ENCODE measurements at regions of chr9 and their contacts with region 1.

Region 1: GRCh38 chr9:112443200-112443599 is 43.4 kb upstream of the KIAA1958 start:
- DNase-seq: peak; percentile 18
- H3K4me3 Mint-ChIP-seq: no peak overlapping the region
- H3K27ac Mint-ChIP-seq: no peak overlapping the region
- H3K4me1 Mint-ChIP-seq: no peaks in the 10 kb centered on the region
- H3K27me3 Mint-ChIP-seq: no peaks in the 10 kb centered on the region

Region 2: DNA sequence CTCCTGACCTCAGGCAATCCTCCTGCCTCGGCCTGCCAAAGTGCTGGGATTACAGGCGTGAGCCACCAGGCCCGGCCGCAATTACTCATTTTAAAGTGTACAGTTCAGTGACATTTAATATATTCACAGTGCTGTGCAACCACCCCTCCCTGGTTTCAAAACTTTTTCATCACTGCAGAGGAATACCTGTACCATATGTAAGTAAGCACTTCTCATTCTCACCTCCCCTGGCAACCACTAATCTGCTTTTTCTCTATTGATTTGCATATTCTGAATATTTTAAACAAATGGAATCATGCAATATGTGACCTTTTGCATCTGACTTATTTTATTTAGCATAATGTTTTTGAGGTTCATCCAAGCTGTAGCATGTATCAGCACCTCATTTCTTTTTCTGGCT is 22.2 kb after region 1 on chr9:
- CTCF ChIA-PET with region 1: no interaction called
- POLR2A ChIA-PET with region 1: no interaction called
- intact Hi-C with region 1: no loop called
- DNase-seq: no peak
- H3K4me3 Mint-ChIP-seq: no peak overlapping the region
- H3K27ac Mint-ChIP-seq: no peak overlapping the region
- H3K4me1 Mint-ChIP-seq: no peaks in the 10 kb centered on the region
- H3K27me3 Mint-ChIP-seq: no peaks in the 10 kb centered on the region

Region 3: DNA sequence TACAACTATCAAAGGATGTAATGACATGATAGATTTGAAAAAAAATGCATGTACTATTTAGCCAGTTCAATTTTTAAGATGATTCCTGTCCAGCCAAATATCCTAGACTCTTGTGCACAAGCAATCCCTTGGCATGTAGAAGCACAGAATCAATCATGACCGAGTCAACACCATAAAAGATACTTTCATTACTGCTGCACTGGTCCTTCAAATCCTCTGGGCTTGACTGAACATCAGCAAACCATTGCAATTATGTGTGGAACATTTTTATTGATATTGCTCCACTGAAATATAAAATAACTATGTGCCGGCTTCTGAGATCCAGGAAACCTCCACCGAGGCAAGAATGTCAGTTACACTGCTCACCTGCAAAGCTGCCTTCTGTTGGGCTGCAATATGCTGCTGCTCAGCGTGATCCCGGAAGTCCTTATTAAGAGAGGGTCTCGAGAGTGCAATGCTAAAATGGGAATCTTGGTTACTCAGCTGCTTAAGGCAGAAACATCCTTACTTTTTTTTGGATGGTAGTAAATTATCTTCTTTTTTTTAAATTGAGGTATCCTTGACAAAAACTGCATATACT is 246.1 kb after region 1 on chr9:
- CTCF ChIA-PET with region 1: no interaction called
- POLR2A ChIA-PET with region 1: no interaction called
- intact Hi-C with region 1: no loop called
- DNase-seq: no peak
- H3K4me3 Mint-ChIP-seq: no peak overlapping the region
- H3K27ac Mint-ChIP-seq: no peak overlapping the region
- H3K4me1 Mint-ChIP-seq: peaks cover 3% of the 10 kb centered on the region
- H3K27me3 Mint-ChIP-seq: no peaks in the 10 kb centered on the region

Region 4: GRCh38 chr9:112717661-112718341 is 274.6 kb after region 1 on chr9 and contains the start of gene INIP:
- CTCF ChIA-PET with region 1: interaction called, 5 read pairs
- POLR2A ChIA-PET with region 1: no interaction called
- intact Hi-C with region 1: loop called (anchors 2 kb)
- DNase-seq: peak; percentile 99
- H3K4me3 Mint-ChIP-seq: peak within 1 kb of the TSS; percentile 90
- H3K27ac Mint-ChIP-seq: peak within 1 kb of the TSS; percentile 93
- H3K4me1 Mint-ChIP-seq: peaks cover 35% of the 10 kb centered on the region
- H3K27me3 Mint-ChIP-seq: no peaks in the 10 kb centered on the region
- total RNA-seq, gene INIP: 35.1 to 37.8 TPM

Region 5: GRCh38 chr9:112819635-112820496 is 376.7 kb after region 1 on chr9:
- CTCF ChIA-PET with region 1: interaction called, 12 read pairs
- POLR2A ChIA-PET with region 1: no interaction called
- intact Hi-C with region 1: no loop called
- DNase-seq: no peak
- H3K4me3 Mint-ChIP-seq: no peak overlapping the region
- H3K27ac Mint-ChIP-seq: no peak overlapping the region
- H3K4me1 Mint-ChIP-seq: no peaks in the 10 kb centered on the region
- H3K27me3 Mint-ChIP-seq: no peaks in the 10 kb centered on the region